ENCODE measurements at regions of chr6 and their contacts with region 1.

Region 1: GRCh38 chr6:160534050-160534696 is 129.9 kb downstream of the LPA start:
- DNase-seq: peak; percentile 36 to 38
- ATAC-seq: peak; percentile 65 to 94; a peak in 5 of 6 replicates
- H3K4me3 ChIP-seq: peak overlapping the region; percentile 22; the same call in 1 of the 3 replicates
- H3K27ac ChIP-seq: peak overlapping the region in 1 of 2 experiments; percentile 28; a peak in 1 of 6 replicates
- H3K4me1 ChIP-seq: no peaks in the 10 kb centered on the region
- CTCF ChIP-seq: peak; percentile 83
- EP300 ChIP-seq: no peak
- POLR2A ChIP-seq: no peak
- RAD21 ChIP-seq: peak; percentile 86 to 87

Region 2: GRCh38 chr6:159862103-159862502 is 672.1 kb before region 1 on chr6:
- CTCF ChIA-PET with region 1: interaction called, 23 read pairs
- POLR2A ChIA-PET with region 1: no interaction called
- DNase-seq: no peak
- ATAC-seq: no peak
- H3K4me3 ChIP-seq: no peak overlapping the region
- H3K27ac ChIP-seq: no peak overlapping the region
- H3K4me1 ChIP-seq: no peaks in the 10 kb centered on the region
- CTCF ChIP-seq: no peak
- EP300 ChIP-seq: no peak
- POLR2A ChIP-seq: no peak
- RAD21 ChIP-seq: no peak

Region 3: GRCh38 chr6:160071800-160072690 is 462.1 kb before region 1 on chr6:
- CTCF ChIA-PET with region 1: interaction called, 15 read pairs
- POLR2A ChIA-PET with region 1: no interaction called
- DNase-seq: peak in 1 of 2 experiments; percentile 27
- ATAC-seq: peak; percentile 76 to 89; a peak in 5 of 6 replicates
- H3K4me3 ChIP-seq: no peak overlapping the region
- H3K27ac ChIP-seq: no peak overlapping the region
- H3K4me1 ChIP-seq: no peaks in the 10 kb centered on the region
- CTCF ChIP-seq: peak; percentile 15; the same call in 1 of the 3 replicates
- EP300 ChIP-seq: no peak
- POLR2A ChIP-seq: no peak
- RAD21 ChIP-seq: peak; percentile 25 to 41; a peak in 2 of 5 replicates

Region 4: GRCh38 chr6:160088069-160088783 is 445.9 kb before region 1 on chr6:
- CTCF ChIA-PET with region 1: interaction called, 16 read pairs
- POLR2A ChIA-PET with region 1: no interaction called
- DNase-seq: peak; percentile 55 to 80
- ATAC-seq: peak; percentile 88 to 93
- H3K4me3 ChIP-seq: no peak overlapping the region
- H3K27ac ChIP-seq: 0 out of 6 replicates have a peak overlapping the region, but pooled peaks of 1 of the 2 experiments have one; percentile 4
- H3K4me1 ChIP-seq: 0 out of 3 replicates have a peak, but pooled peaks cover 3% of the 10 kb centered on the region
- CTCF ChIP-seq: peak; percentile 74
- EP300 ChIP-seq: no peak
- POLR2A ChIP-seq: no peak
- RAD21 ChIP-seq: peak; percentile 78 to 80

Region 5: DNA sequence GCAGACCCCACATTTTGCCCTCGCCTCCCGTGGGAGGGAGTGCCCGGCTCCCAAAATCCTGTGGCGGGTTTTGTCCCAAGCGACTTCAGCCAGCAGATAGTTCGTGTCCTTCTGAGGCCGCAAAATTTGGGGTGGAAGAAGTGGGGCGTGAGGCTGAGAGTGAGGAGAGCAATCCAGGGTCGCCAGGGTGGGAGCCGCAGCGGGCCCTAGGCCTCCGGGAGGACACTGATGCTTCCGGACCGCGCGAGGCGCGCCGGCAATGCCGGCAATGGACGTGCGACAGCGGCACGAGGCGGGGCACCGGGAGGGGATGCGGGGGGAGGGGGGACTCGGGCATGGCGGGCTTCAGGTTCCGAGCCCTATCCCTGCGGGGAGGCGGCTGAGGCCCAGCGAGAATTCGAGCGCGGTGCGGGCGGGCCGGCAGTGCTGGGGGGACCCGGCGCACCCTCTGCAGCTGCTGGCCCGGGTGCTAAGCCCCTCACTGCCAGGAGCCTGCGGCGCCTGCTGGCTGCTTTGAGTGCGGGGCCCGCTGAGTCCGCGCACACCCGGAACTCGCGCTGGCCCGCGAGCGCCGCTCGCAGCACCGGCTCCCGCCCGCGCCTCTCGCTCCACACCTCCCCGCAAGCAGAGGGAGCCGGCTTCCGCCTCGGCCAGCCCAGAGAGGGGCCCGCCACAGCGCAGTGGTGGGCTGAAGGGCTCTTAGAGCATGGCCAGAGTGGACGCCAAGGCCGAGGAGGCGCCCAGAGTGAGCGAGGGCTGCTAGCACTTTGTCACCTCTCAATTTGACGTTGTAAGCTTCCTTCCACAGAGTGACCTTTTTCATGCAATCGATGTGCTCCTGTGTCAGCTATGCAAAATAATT is 13.9 kb before region 1 on chr6:
- CTCF ChIA-PET with region 1: interaction called, 54 read pairs
- POLR2A ChIA-PET with region 1: no interaction called
- DNase-seq: peak; percentile 61 to 71
- ATAC-seq: peak; percentile 94 to 96
- H3K4me3 ChIP-seq: peak overlapping the region; percentile 58
- H3K27ac ChIP-seq: peak overlapping the region; percentile 77 to 97
- H3K4me1 ChIP-seq: 0 out of 3 replicates have a peak, but pooled peaks cover 9% of the 10 kb centered on the region
- CTCF ChIP-seq: peak; percentile 74; the same call in 2 of the 3 replicates
- EP300 ChIP-seq: no peak
- POLR2A ChIP-seq: peak; percentile 36; the same call in 1 of the 2 replicates
- RAD21 ChIP-seq: peak; percentile 66 to 68; a peak in 4 of 5 replicates

Measured in A549 (cell line).